HepG2 (cell line): ENCODE measurements at regions of chr10 and their contacts with region 1.

Region 1: GRCh38 chr10:34637418-34637911 is 177.6 kb downstream of the PARD3 start:
- DNase-seq: peak; percentile 16
- ATAC-seq: peak; percentile 70
- H3K4me3 ChIP-seq: no peak overlapping the region
- H3K27ac ChIP-seq: no peak overlapping the region
- H3K4me1 ChIP-seq: peaks cover 17% of the 10 kb centered on the region
- H3K27me3 ChIP-seq: no peaks in the 10 kb centered on the region
- CTCF ChIP-seq: peak; percentile 92
- EP300 ChIP-seq: no peak
- POLR2A ChIP-seq: no peak
- RAD21 ChIP-seq: peak; percentile 49

Region 2: DNA sequence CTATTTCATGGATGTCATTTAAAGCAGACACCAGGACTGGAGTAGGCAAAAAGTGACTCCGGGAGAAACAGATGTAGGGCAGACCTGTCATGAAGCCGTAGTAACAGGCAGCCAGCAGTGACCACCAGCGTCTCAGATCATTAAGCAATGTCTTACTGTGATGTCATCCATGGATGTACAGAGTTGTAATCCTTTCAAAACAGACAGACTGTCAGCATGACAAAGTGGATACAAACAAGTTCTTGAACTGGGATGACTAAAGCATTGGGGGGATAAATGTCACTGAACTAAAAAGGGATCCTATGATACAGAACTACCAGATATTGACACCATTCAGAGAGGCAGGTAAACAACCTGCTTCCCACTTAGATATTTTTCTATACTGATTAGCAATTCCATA is 497.9 kb before region 1 on chr10:
- CTCF ChIA-PET with region 1: no interaction called
- POLR2A ChIA-PET with region 1: no interaction called
- in situ Hi-C with region 1: loop called (anchors 25 kb)
- intact Hi-C with region 1: no loop called
- DNase-seq: no peak
- ATAC-seq: no peak
- H3K4me3 ChIP-seq: no peak overlapping the region
- H3K27ac ChIP-seq: no peak overlapping the region
- H3K4me1 ChIP-seq: no peaks in the 10 kb centered on the region
- H3K27me3 ChIP-seq: no peaks in the 10 kb centered on the region
- CTCF ChIP-seq: no peak
- EP300 ChIP-seq: no peak
- POLR2A ChIP-seq: no peak
- RAD21 ChIP-seq: no peak

Region 3: DNA sequence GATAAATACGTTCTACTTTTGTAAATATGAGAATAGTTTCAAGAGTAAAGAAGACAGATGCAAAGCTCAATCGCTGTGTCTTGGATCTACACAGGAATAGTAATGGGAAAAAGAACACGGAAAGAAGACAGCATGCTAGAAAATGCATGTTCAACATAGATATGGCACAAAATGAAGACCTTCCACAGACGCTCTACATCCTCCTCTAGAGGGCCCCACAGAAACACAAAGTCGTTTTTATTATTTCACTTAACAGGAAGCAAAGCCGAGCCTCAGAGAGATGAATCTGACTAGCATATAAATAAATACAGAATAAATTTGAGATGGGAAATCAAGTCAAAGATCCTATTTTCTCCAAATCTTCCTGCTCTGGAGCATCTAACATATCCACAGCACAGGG is 114.9 kb before region 1 on chr10:
- CTCF ChIA-PET with region 1: no interaction called
- POLR2A ChIA-PET with region 1: no interaction called
- in situ Hi-C with region 1: no loop called
- intact Hi-C with region 1: loop called (anchors 10 kb)
- DNase-seq: no peak
- ATAC-seq: no peak
- H3K4me3 ChIP-seq: no peak overlapping the region
- H3K27ac ChIP-seq: no peak overlapping the region
- H3K4me1 ChIP-seq: no peaks in the 10 kb centered on the region
- H3K27me3 ChIP-seq: no peaks in the 10 kb centered on the region
- CTCF ChIP-seq: no peak
- EP300 ChIP-seq: no peak
- POLR2A ChIP-seq: no peak
- RAD21 ChIP-seq: no peak

Region 4: GRCh38 chr10:34689053-34689452 is 51.6 kb after region 1 on chr10:
- CTCF ChIA-PET with region 1: no interaction called
- POLR2A ChIA-PET with region 1: no interaction called
- in situ Hi-C with region 1: no loop called
- intact Hi-C with region 1: no loop called
- DNase-seq: no peak
- ATAC-seq: no peak
- H3K4me3 ChIP-seq: no peak overlapping the region
- H3K27ac ChIP-seq: no peak overlapping the region
- H3K4me1 ChIP-seq: no peaks in the 10 kb centered on the region
- H3K27me3 ChIP-seq: no peaks in the 10 kb centered on the region
- CTCF ChIP-seq: no peak
- EP300 ChIP-seq: no peak
- POLR2A ChIP-seq: no peak
- RAD21 ChIP-seq: no peak

Region 5: DNA sequence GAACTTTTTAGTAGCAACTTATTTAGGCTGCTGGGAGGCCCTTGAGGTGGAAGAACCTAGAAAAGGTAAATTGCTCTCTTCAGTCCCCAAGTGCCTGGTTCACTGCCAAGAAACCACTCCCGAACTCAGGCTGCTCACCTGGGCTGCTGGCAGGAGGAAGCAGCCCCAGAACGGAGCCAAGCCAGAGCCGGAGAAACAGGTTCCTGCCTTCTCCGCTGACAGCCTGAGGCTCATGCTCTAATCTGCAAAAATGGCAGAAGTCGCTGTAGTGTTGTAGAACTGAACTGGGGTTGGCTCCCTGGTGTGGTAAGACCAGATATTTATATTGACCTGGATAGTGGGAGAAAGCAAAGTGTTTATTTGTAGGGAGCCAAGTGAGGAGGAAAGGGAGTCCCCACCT is 316.7 kb after region 1 on chr10:
- CTCF ChIA-PET with region 1: no interaction called
- POLR2A ChIA-PET with region 1: no interaction called
- in situ Hi-C with region 1: no loop called
- intact Hi-C with region 1: no loop called
- DNase-seq: no peak
- ATAC-seq: no peak
- H3K4me3 ChIP-seq: no peak overlapping the region
- H3K27ac ChIP-seq: no peak overlapping the region
- H3K4me1 ChIP-seq: 0 out of 2 replicates have a peak, but pooled peaks cover 7% of the 10 kb centered on the region
- H3K27me3 ChIP-seq: peaks cover 0 to 10% of the 10 kb centered on the region in 2 experiments; a peak in 2 of 5 replicates
- CTCF ChIP-seq: no peak
- EP300 ChIP-seq: no peak
- POLR2A ChIP-seq: no peak
- RAD21 ChIP-seq: no peak